Right ventricle myocardium inferior (tissue), 1 donor: ENCODE measurements at regions of chr1 and their contacts with region 1.

Region 1: DNA sequence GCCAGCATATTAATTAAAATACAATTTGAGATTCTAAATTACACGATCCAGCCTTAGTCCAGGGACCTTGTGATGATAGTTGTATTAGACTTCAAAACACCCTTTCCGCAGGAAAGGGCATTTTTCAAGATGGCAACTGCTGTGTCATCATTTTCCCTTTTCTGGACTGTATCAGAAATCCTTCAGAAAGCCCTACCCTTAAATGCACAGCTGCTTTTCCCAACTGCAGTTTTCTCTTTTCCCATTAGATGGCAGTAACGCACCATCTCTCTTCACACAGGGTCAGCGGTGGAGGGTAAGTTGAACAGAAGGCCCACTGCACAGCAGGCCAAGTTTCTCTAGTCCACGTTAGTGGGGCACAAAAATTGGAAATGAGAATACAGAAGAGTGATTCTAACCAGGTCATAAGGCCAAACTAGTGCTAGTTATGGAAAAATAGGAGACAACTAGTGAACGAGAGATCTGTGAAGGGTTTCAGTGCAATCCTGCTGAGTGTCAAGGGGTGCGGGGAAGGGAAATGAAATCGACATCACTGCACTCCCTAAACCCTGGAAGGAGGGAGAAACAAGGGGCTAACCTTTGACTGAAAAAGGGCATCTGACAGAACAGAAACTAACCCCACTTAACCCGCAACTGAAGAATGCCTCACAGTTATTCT is 22.1 kb upstream of the TDRD10 start:
- DNase-seq: no peak
- ATAC-seq: peak; percentile 95

Region 2: GRCh38 chr1:154501423-154502065 is 21.7 kb after region 1 on chr1:
- intact Hi-C with region 1: loop called (anchors 1 kb)
- DNase-seq: peak; percentile 78
- ATAC-seq: peak; percentile 83

Region 3: GRCh38 chr1:154546264-154547063 is 66.6 kb after region 1 on chr1:
- intact Hi-C with region 1: loop called (anchors 1 kb)
- DNase-seq: no peak
- ATAC-seq: peak; percentile 76